ENCODE measurements at regions of chr2 and their contacts with region 1.

Region 1: DNA sequence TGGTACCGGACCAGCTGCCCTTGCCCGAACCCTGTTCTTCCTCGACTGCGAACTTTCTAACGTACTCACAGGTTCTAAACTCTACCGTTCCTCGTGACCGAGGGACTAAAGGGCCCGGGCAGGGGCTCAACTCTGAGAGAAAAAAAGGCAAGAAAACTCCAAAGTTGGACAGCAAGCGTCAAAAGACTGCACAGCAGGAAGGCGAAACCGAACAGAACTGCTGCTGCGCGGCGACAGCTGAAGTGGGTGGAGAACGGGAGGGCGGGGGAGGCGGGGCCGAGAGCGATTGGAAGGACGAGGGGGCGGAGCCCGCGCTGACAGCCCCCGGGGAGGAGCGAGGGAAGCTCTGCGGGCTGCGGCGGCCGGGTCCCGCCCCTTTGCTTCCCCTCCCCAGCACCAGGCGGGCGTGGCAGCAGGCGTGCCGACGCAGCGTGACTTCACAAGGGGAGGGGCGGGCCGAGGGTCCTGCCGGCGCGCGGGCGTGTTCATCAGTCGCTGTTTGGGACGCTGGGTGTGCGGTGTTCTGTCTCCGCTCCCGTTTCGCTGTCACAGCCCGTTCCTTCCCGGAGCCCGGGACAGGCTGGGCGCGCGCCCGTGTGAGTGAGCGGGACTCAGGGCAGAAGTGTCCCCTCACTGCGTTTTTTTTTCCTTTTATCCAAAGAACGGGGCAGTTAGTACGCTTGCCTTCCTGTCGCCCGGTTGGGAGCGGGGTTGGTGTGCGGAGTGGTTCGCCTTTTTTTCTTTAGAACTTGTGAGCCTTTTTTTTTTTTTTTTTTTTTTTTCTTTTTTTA is at the start of gene NABP1:
- DNase-seq: peak; percentile 94
- H3K4me3 ChIP-seq: peak within 1 kb of the TSS; percentile 79
- H3K27ac ChIP-seq: peak within 1 kb of the TSS; percentile 99
- H3K27me3 ChIP-seq: no peaks in the 10 kb centered on the region
- CTCF ChIP-seq: no peak
- polyA plus RNA-seq, gene NABP1: 138 and 204 TPM in 2 replicates

Region 2: GRCh38 chr2:191486584-191487320 is 191.1 kb before region 1 on chr2:
- CTCF ChIA-PET with region 1: no interaction called
- POLR2A ChIA-PET with region 1: no interaction called
- DNase-seq: peak; percentile 91
- H3K4me3 ChIP-seq: no peak overlapping the region
- H3K27ac ChIP-seq: peak overlapping the region; percentile 63
- H3K27me3 ChIP-seq: no peaks in the 10 kb centered on the region
- CTCF ChIP-seq: no peak

Region 3: DNA sequence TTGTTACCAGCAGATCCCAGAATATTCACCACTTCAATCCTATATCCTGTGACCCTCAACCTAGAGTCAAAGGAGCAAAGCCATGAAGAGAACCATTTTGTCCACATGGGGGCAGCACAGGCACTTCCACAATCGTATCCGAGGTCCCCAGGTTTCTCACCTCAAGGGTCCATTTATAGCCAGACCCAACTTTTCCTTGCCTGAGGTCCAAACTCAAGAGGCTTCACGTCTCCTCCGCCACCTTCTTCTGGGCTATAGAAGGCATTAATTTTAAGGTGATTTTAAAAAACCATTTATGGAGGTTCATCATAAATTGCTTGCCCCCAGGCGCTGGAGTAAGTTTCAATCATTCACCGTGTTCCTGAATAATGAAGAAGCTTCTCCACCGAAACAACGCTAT is 111.5 kb before region 1 on chr2:
- CTCF ChIA-PET with region 1: interaction called, 8 read pairs
- POLR2A ChIA-PET with region 1: interaction called, 21 read pairs
- DNase-seq: peak; percentile 26
- H3K4me3 ChIP-seq: no peak overlapping the region
- H3K27ac ChIP-seq: no peak overlapping the region
- H3K27me3 ChIP-seq: no peaks in the 10 kb centered on the region
- CTCF ChIP-seq: peak; percentile 91

Region 4: GRCh38 chr2:191618046-191618780 is 59.6 kb before region 1 on chr2:
- CTCF ChIA-PET with region 1: no interaction called
- POLR2A ChIA-PET with region 1: interaction called, 19 read pairs
- DNase-seq: no peak
- H3K4me3 ChIP-seq: no peak overlapping the region
- H3K27ac ChIP-seq: no peak overlapping the region
- H3K27me3 ChIP-seq: no peaks in the 10 kb centered on the region
- CTCF ChIP-seq: no peak

Region 5: GRCh38 chr2:191631754-191632153 is 46.1 kb before region 1 on chr2:
- CTCF ChIA-PET with region 1: no interaction called
- POLR2A ChIA-PET with region 1: interaction called, 116 read pairs
- DNase-seq: no peak
- H3K4me3 ChIP-seq: no peak overlapping the region
- H3K27ac ChIP-seq: no peak overlapping the region
- H3K27me3 ChIP-seq: no peaks in the 10 kb centered on the region
- CTCF ChIP-seq: no peak

Region 6: GRCh38 chr2:191656391-191656790 is 21.4 kb before region 1 on chr2:
- CTCF ChIA-PET with region 1: no interaction called
- POLR2A ChIA-PET with region 1: interaction called, 36 read pairs
- DNase-seq: no peak
- H3K4me3 ChIP-seq: no peak overlapping the region
- H3K27ac ChIP-seq: peak overlapping the region; percentile 47
- H3K27me3 ChIP-seq: no peaks in the 10 kb centered on the region
- CTCF ChIP-seq: no peak

Region 7: GRCh38 chr2:191691016-191691735 is 13.3 kb after region 1 on chr2:
- CTCF ChIA-PET with region 1: interaction called, 4 read pairs
- POLR2A ChIA-PET with region 1: interaction called, 37 read pairs
- DNase-seq: peak; percentile 49
- H3K4me3 ChIP-seq: no peak overlapping the region
- H3K27ac ChIP-seq: no peak overlapping the region
- H3K27me3 ChIP-seq: no peaks in the 10 kb centered on the region
- CTCF ChIP-seq: peak; percentile 82